ENCODE measurements at regions of chr10 and their contacts with region 1.

Region 1: DNA sequence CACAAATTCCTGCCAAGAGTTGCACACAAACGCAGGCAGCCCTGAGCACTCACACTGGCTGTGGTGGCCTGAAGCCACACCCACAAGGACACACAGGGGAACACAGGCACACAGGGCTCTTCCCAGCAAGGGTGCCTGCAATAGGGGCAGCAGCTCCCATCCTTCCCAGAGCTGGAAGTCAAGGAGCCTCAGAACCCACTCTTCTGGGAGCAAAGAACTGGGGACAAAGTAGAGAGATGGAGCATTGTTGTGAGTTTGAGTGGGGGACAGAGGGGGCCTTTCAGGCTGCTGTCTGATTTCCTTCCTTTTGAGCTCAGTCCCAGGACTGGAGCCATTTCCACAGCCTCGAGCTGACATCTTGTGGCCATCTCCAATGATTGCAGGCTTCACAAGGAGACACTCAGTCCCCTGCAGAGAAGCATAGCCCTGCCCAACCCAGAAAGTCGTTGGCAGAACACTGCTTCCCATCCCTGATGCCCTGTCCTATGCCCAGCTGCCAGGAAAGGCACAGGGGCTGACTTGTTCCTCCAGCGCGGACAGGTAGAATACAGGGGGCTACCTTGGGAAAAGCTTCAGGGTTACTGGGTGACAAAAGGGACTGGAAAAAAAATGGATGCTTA is 34.4 kb upstream of the SLF2 start:
- DNase-seq: no peak
- ATAC-seq: peak; percentile 86
- H3K4me3 ChIP-seq: no peak overlapping the region
- H3K27ac ChIP-seq: no peak overlapping the region
- H3K4me1 ChIP-seq: no peaks in the 10 kb centered on the region
- H3K27me3 ChIP-seq: no peaks in the 10 kb centered on the region; a peak in 1 of 4 replicates
- CTCF ChIP-seq: peak; percentile 55 to 76 (median 63); a peak in 5 of 6 replicates
- EP300 ChIP-seq: no peak
- POLR2A ChIP-seq: no peak
- RAD21 ChIP-seq: peak; percentile 77

Region 2: GRCh38 chr10:100562008-100562711 is 316.2 kb before region 1 on chr10:
- CTCF ChIA-PET with region 1: no interaction called
- POLR2A ChIA-PET with region 1: no interaction called
- RAD21 ChIA-PET with region 1: no interaction called
- SMC1A ChIA-PET with region 1: no interaction called
- in situ Hi-C with region 1: no loop called
- intact Hi-C with region 1: loop called (anchors 2 kb)
- DNase-seq: peak; percentile 16
- ATAC-seq: peak; percentile 95
- H3K4me3 ChIP-seq: no peak overlapping the region
- H3K27ac ChIP-seq: no peak overlapping the region
- H3K4me1 ChIP-seq: no peaks in the 10 kb centered on the region
- H3K27me3 ChIP-seq: peaks cover 0 to under 1% of the 10 kb centered on the region in 2 experiments; a peak in 1 of 4 replicates
- CTCF ChIP-seq: peak; percentile 89 to 95 (median 92)
- EP300 ChIP-seq: no peak
- POLR2A ChIP-seq: no peak; the same call in 1 of the 2 replicates
- RAD21 ChIP-seq: peak; percentile 93

Region 3: GRCh38 chr10:100670828-100671479 is 207.4 kb before region 1 on chr10:
- CTCF ChIA-PET with region 1: interaction called, 7 read pairs
- POLR2A ChIA-PET with region 1: no interaction called
- RAD21 ChIA-PET with region 1: interaction called, 4 read pairs
- SMC1A ChIA-PET with region 1: no interaction called
- in situ Hi-C with region 1: loop called (anchors 5 kb)
- intact Hi-C with region 1: loop called (anchors 1 kb)
- DNase-seq: no peak
- ATAC-seq: peak; percentile 100
- H3K4me3 ChIP-seq: no peak overlapping the region
- H3K27ac ChIP-seq: no peak overlapping the region
- H3K4me1 ChIP-seq: no peaks in the 10 kb centered on the region
- H3K27me3 ChIP-seq: peaks cover 7 to 16% of the 10 kb centered on the region in 2 experiments
- CTCF ChIP-seq: peak; percentile 62 to 75 (median 66); a peak in 5 of 6 replicates
- EP300 ChIP-seq: no peak
- POLR2A ChIP-seq: no peak
- RAD21 ChIP-seq: peak; percentile 50

Region 4: DNA sequence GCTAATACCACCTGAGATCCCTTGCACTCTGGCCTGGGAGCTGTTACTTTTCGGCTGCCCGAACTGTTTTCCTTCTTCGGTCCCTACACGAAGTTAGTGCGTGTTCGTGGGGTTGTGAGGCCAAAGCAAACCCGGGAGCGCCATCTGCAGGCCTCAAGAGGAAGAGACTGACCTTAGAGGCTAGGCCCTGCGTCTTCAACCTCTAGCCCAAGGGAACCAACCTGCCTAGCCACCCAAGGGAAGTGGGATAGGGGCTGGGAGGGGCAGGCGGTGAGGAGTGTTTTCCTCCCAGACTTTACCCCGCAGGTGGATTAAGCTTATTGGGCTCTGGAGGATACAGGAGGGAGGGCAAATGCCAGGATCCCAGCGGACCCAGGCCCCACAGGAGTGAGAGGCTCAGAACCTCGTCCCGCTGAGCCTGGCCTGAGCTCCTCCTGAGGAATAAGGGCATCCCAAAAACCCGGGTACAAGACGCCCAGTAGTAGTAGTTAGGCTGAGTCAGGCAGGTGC is 134.7 kb before region 1 on chr10:
- CTCF ChIA-PET with region 1: interaction called, 4 read pairs
- POLR2A ChIA-PET with region 1: no interaction called
- RAD21 ChIA-PET with region 1: interaction called, 6 read pairs
- SMC1A ChIA-PET with region 1: interaction called, 3 read pairs
- in situ Hi-C with region 1: no loop called
- intact Hi-C with region 1: loop called (anchors 10 kb)
- DNase-seq: no peak
- ATAC-seq: peak; percentile 91
- H3K4me3 ChIP-seq: no peak overlapping the region
- H3K27ac ChIP-seq: no peak overlapping the region
- H3K4me1 ChIP-seq: no peaks in the 10 kb centered on the region
- H3K27me3 ChIP-seq: peaks cover 34 to 44% of the 10 kb centered on the region in 2 experiments
- CTCF ChIP-seq: peak; percentile 81 to 82 (median 81)
- EP300 ChIP-seq: no peak
- POLR2A ChIP-seq: no peak
- RAD21 ChIP-seq: peak; percentile 76

Region 5: DNA sequence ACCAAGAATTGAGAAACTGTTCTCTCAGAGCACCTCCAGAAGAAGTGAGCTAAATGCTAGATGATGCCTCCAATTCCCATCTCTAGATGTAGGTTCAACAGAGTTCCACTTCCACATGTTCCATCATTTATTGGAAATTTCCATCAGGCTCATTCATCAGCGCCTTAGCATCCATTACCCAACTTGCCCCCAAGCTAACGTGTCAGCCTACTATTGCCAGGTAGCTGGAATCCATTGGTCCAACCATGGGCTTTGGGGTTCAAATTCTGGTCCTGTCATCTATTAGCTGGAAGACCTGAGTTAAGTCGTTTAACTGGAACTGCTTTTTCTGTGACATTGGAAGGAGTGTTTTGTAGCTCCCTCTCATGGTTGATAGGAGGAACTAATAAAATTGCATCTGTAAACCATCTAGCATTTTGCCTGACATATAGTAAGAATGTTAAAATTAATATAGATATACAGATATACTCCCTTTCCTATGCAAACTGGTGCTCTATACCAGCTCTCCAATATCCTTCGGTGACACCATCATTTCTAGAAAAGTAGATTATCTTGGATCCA is 10.5 kb after region 1 on chr10:
- CTCF ChIA-PET with region 1: interaction called, 14 read pairs
- POLR2A ChIA-PET with region 1: no interaction called
- RAD21 ChIA-PET with region 1: interaction called, 8 read pairs
- SMC1A ChIA-PET with region 1: interaction called, 21 read pairs
- in situ Hi-C with region 1: no loop called
- intact Hi-C with region 1: no loop called
- DNase-seq: no peak
- ATAC-seq: no peak; the same call in 2 of the 3 replicates
- H3K4me3 ChIP-seq: no peak overlapping the region
- H3K27ac ChIP-seq: no peak overlapping the region
- H3K4me1 ChIP-seq: no peaks in the 10 kb centered on the region
- H3K27me3 ChIP-seq: no peaks in the 10 kb centered on the region; a peak in 1 of 4 replicates
- CTCF ChIP-seq: peak in 2 of 3 experiments; percentile 21 to 34; a peak in 3 of 6 replicates
- EP300 ChIP-seq: no peak
- POLR2A ChIP-seq: no peak
- RAD21 ChIP-seq: peak; percentile 32; the same call in 1 of the 2 replicates

Region 6: DNA sequence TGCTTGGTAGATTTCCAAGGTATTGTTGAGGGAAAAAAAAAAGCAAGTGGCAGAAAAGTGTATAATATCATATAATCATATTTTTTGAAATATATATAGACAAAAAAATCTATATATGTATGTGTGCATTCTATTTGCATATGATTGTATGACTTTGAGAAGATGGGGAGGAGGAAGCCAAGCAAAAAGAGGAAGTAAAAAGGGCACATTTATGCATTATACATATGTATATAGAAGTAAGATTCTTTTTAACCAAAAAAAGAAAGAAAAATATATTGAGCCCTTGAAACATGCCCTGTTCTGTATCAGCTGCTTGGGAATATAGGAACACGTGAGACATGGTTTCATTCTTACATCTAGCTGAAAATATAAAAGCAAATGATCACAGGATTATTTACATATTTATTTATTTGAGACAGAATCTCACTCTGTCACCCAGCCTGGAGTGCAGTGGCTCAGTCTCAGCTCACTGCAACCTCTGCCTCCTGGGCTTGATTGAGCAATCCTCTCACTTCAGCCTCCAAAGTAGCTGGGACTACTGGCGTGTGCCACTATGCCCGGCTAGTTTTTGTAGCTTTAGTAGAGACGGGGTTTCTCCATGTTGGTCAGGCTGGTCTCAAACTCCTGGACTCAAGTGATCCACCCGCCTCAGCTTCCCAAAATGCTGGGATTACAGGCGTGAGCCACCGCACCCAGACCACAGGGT is 16.3 kb after region 1 on chr10:
- CTCF ChIA-PET with region 1: interaction called, 7 read pairs
- POLR2A ChIA-PET with region 1: no interaction called
- RAD21 ChIA-PET with region 1: interaction called, 4 read pairs
- SMC1A ChIA-PET with region 1: interaction called, 11 read pairs
- in situ Hi-C with region 1: no loop called
- intact Hi-C with region 1: no loop called
- DNase-seq: no peak
- ATAC-seq: peak; percentile 59
- H3K4me3 ChIP-seq: no peak overlapping the region
- H3K27ac ChIP-seq: no peak overlapping the region
- H3K4me1 ChIP-seq: no peaks in the 10 kb centered on the region
- H3K27me3 ChIP-seq: peaks cover 0 to 1% of the 10 kb centered on the region in 2 experiments; a peak in 2 of 4 replicates
- CTCF ChIP-seq: no peak
- EP300 ChIP-seq: no peak
- POLR2A ChIP-seq: no peak
- RAD21 ChIP-seq: no peak